ENCODE measurements at regions of chr15 and their contacts with region 1.

Region 1: DNA sequence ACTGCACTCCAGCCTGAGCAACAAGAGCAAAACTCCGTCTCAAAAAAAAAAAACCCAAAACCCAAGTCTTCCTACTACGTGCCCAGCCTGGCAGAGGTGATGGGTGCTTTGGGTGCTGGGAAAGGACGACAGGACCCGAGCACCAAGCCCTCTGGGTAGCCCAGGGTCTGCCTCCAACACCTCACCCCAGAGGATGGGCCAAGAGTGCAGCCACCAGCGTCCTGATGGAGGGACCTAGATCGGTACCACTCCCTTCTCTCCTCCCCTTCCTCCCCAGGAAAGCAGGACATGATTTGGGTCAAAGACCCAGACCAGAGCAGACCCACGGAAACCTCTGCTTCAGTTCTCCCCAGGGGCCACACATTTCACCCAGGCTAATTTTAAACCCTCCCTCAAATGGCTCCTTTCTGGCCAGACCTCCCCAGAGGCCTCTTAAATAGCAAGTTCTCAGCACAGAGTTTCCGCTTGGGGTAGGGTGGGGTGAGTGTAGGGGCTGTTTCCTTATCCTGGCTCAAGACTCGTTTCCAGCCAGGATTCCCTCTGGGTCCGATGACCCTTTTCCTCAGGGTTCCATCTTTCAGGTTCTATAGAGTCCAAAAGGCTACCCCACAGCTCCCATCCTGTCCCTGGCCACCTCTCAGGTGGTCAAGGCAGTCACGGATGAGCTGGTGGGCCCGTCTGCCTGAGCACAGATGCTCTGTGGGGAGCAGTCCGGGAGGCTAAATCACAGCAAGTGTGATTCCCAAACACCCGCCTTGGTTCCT is 20.5 kb downstream of the RBPMS2 start:
- DNase-seq: peak; percentile 69
- H3K4me3 ChIP-seq: peak overlapping the region; percentile 38
- H3K27ac ChIP-seq: no peak overlapping the region
- H3K4me1 ChIP-seq: peaks cover 19% of the 10 kb centered on the region
- CTCF ChIP-seq: no peak

Region 2: GRCh38 chr15:64651573-64652260 is 103.1 kb before region 1 on chr15:
- CTCF ChIA-PET with region 1: no interaction called
- POLR2A ChIA-PET with region 1: no interaction called
- intact Hi-C with region 1: no loop called
- DNase-seq: peak; percentile 60
- H3K4me3 ChIP-seq: no peak overlapping the region
- H3K27ac ChIP-seq: no peak overlapping the region
- H3K4me1 ChIP-seq: peaks cover 17% of the 10 kb centered on the region
- CTCF ChIP-seq: no peak

Region 3: GRCh38 chr15:65086017-65086679 is 331.3 kb after region 1 on chr15:
- CTCF ChIA-PET with region 1: interaction called, 15 read pairs
- POLR2A ChIA-PET with region 1: no interaction called
- intact Hi-C with region 1: no loop called
- DNase-seq: peak; percentile 20
- H3K4me3 ChIP-seq: no peak overlapping the region
- H3K27ac ChIP-seq: no peak overlapping the region
- H3K4me1 ChIP-seq: no peaks in the 10 kb centered on the region
- CTCF ChIP-seq: 0 out of 2 replicates have a peak, but pooled peaks have one; percentile 37